ENCODE measurements at regions of chr5 and their contacts with region 1.

Region 1: DNA sequence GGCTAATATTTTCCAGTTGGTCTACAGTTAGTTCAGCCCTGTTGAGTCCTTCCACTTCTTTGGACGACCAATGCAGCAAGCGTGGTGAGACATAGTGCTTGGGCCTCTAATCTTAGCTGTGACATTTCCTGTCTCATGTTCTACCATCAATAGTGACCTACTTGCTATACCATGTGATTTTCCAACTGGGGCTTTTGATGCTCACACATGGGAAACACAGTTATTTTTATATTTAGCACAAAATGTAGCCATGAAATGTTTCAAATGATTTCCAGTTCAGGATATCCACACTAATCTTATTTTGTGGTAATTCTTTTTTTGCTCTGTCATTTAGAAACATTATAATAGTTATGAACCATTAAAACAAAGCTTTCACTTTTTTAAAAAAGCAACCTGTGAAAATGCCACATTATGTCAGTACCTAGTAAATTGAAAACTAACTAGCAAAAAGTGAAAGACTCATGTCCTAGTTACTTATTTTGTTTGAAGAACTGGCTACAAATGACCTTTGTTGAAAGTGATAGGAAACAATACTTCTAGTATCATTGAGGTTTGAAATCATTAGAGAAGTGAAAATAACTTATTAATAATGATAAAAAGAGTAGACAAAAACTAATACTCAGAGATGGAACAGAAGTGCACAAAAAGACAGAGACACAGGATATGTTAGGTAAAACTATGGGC is 18.3 kb downstream of the MARCHF3 start:
- DNase-seq: peak in 2 of 3 donors; percentile 21 to 47
- H3K4me3 ChIP-seq: no peak overlapping the region
- H3K27ac ChIP-seq: no peak overlapping the region
- H3K4me1 ChIP-seq: peaks cover 9 to 20% (median 10%) of the 10 kb centered on the region in 4 experiments
- H3K27me3 ChIP-seq: no peaks in the 10 kb centered on the region

Region 2: GRCh38 chr5:126641387-126641786 is 370.7 kb before region 1 on chr5:
- CTCF ChIA-PET with region 1: no interaction called
- POLR2A ChIA-PET with region 1: no interaction called
- DNase-seq: no peak
- H3K4me3 ChIP-seq: no peak overlapping the region
- H3K27ac ChIP-seq: no peak overlapping the region
- H3K4me1 ChIP-seq: no peaks in the 10 kb centered on the region
- H3K27me3 ChIP-seq: no peaks in the 10 kb centered on the region

Region 3: DNA sequence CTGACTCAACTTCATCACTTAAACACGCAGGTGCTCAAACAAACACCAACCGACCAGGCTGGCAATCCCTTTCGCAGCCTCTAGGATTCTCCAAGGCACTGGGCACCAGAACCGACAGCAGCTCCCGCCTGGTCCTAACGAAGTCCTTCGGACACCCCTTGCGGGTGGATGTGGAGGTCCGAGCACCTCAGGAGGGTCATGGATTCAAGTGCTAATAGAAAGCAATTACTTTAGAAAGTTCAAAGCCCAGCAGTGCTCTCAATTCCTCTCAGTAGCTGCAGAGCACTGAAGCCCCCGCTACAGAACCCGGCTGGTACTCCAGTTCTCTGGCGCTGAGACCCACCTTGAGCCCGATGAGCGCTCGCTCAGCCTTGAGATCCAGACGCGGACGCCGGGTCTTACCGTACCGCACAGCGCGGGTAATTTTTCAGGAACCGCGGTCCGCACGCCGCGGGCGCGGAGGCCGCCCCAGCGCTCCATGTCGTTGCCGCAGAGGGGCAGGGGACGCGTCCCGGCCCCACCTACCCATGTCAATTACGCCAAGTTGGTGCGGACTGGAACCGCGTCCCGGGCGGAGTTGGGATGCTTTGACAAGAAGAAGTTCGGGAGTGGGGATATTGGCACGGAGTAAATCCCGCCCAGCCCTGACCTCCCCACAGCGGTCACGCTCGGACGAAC is 17.6 kb after region 1 on chr5:
- CTCF ChIA-PET with region 1: interaction called, 12 read pairs
- POLR2A ChIA-PET with region 1: interaction called, 5 read pairs
- DNase-seq: peak; percentile 58 to 82 (median 74)
- H3K4me3 ChIP-seq: peak overlapping the region; percentile 77 to 96 (median 93)
- H3K27ac ChIP-seq: peak overlapping the region in 1 of 2 experiments; percentile 76
- H3K4me1 ChIP-seq: peaks cover 4 to 25% (median 24%) of the 10 kb centered on the region in 4 experiments
- H3K27me3 ChIP-seq: no peaks in the 10 kb centered on the region

Region 4: GRCh38 chr5:127092690-127093089 is 80.6 kb after region 1 on chr5:
- CTCF ChIA-PET with region 1: no interaction called
- POLR2A ChIA-PET with region 1: no interaction called
- DNase-seq: no peak
- H3K4me3 ChIP-seq: no peak overlapping the region
- H3K27ac ChIP-seq: no peak overlapping the region
- H3K4me1 ChIP-seq: no peaks in the 10 kb centered on the region
- H3K27me3 ChIP-seq: no peaks in the 10 kb centered on the region